ENCODE measurements at regions of chr21 and their contacts with region 1.

Region 1: GRCh38 chr21:17805966-17806365 is 13.2 kb downstream of the C21orf91 start:
- DNase-seq: peak in 1 of 9 donors; percentile 19
- ATAC-seq: peak; percentile 46
- H3K4me3 ChIP-seq: no peak overlapping the region
- H3K4me3 Mint-ChIP-seq: peak overlapping the region in 5 of 10 donors; percentile 12 to 64 (median 22)
- H3K27ac ChIP-seq: no peak overlapping the region
- H3K27ac Mint-ChIP-seq: peak overlapping the region in 8 of 9 donors; percentile 10 to 93 (median 74)
- H3K4me1 ChIP-seq: peaks cover 0 to 14% of the 10 kb centered on the region in 2 donors
- H3K4me1 Mint-ChIP-seq: peaks cover 25 to 59% (median 54%) of the 10 kb centered on the region in 7 donors
- H3K27me3 ChIP-seq: no peaks in the 10 kb centered on the region
- H3K27me3 Mint-ChIP-seq: no peaks in the 10 kb centered on the region

Region 2: DNA sequence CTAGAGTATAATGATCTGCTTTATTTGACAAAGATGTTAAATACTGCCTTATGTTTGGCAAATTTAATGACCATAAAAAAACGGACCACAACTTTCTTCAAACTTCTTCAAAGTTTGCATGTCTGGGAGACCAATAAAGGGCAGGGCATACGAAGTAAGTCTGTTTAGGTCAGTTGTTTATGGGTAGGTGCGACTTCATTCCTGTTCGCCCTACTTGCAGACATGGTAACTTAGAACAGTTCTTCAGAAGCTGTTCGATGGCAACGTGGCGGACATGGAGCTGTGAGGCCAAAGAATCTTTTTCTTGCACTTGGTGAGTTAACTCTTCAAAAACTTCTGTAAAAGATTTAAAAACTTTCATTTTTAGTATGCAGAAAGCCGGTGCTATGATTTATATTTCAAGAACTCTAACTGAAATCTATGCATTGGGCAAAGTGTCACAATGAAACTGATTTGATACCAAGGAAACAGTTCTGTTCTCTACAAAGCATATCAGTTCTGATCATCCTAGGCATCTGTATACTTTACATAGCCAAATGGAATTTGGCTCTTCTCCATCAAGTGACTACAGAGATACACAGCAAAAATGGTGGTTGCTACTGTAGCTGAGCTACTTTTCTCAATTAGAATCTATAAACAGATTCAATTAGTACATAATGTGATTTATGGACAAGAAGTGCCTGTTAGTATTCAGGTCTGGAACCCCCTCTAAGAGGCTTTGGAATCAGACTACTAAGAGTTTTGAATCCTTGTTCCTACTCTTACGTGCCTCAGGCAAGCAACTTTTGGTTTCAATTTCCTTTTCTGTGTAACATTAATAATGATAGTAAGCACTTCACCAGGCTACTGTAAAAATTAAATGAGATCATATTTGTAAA is 12.5 kb before region 1 on chr21:
- CTCF ChIA-PET with region 1: interaction called, 3 read pairs
- POLR2A ChIA-PET with region 1: interaction called, 11 read pairs
- intact Hi-C with region 1: loop called in 1 of 2 experiments (anchors 1 kb)
- DNase-seq: peak in 2 of 9 donors; percentile 28 to 37
- ATAC-seq: peak; percentile 65
- H3K4me3 ChIP-seq: peak overlapping the region; percentile 36
- H3K4me3 Mint-ChIP-seq: peak overlapping the region; percentile 38 to 86 (median 80)
- H3K27ac ChIP-seq: peak overlapping the region; percentile 73
- H3K27ac Mint-ChIP-seq: peak overlapping the region; percentile 77 to 92 (median 87)
- H3K4me1 ChIP-seq: peaks cover 36 to 47% of the 10 kb centered on the region in 2 donors
- H3K4me1 Mint-ChIP-seq: peaks cover 23 to 92% (median 66%) of the 10 kb centered on the region in 7 donors
- H3K27me3 ChIP-seq: no peaks in the 10 kb centered on the region
- H3K27me3 Mint-ChIP-seq: no peaks in the 10 kb centered on the region

Measured in naive thymus-derived CD4-positive, alpha-beta T cell (primary cell).